PC-9 (cell line): ENCODE measurements at regions of chr9 and their contacts with region 1.

Region 1: GRCh38 chr9:70111042-70111602 is 67.5 kb downstream of the MAMDC2 start:
- DNase-seq: peak; percentile 48 to 58
- H3K4me3 ChIP-seq: no peak overlapping the region
- H3K27ac ChIP-seq: peak overlapping the region; percentile 46
- H3K4me1 ChIP-seq: peaks cover 28% of the 10 kb centered on the region
- H3K27me3 ChIP-seq: no peaks in the 10 kb centered on the region
- CTCF ChIP-seq: peak; percentile 91

Region 2: GRCh38 chr9:69066955-69067354 is 1044.2 kb before region 1 on chr9:
- CTCF ChIA-PET with region 1: no interaction called
- POLR2A ChIA-PET with region 1: no interaction called
- intact Hi-C with region 1: no loop called
- DNase-seq: no peak
- H3K4me3 ChIP-seq: no peak overlapping the region
- H3K27ac ChIP-seq: no peak overlapping the region
- H3K4me1 ChIP-seq: no peaks in the 10 kb centered on the region
- H3K27me3 ChIP-seq: no peaks in the 10 kb centered on the region
- CTCF ChIP-seq: no peak

Region 3: GRCh38 chr9:69174616-69175463 is 936.3 kb before region 1 on chr9:
- CTCF ChIA-PET with region 1: no interaction called
- POLR2A ChIA-PET with region 1: no interaction called
- intact Hi-C with region 1: loop called (anchors 10 kb)
- DNase-seq: peak; percentile 65 to 89
- H3K4me3 ChIP-seq: peak overlapping the region; percentile 70
- H3K27ac ChIP-seq: peak overlapping the region; percentile 97
- H3K4me1 ChIP-seq: peaks cover 89% of the 10 kb centered on the region
- H3K27me3 ChIP-seq: no peaks in the 10 kb centered on the region
- CTCF ChIP-seq: no peak

Region 4: GRCh38 chr9:69745716-69746437 is 365.2 kb before region 1 on chr9:
- CTCF ChIA-PET with region 1: interaction called, 3 read pairs
- POLR2A ChIA-PET with region 1: no interaction called
- intact Hi-C with region 1: loop called (anchors 5 kb)
- DNase-seq: no peak
- H3K4me3 ChIP-seq: no peak overlapping the region
- H3K27ac ChIP-seq: no peak overlapping the region
- H3K4me1 ChIP-seq: no peaks in the 10 kb centered on the region
- H3K27me3 ChIP-seq: no peaks in the 10 kb centered on the region
- CTCF ChIP-seq: peak; percentile 41; the same call in 1 of the 2 replicates

Region 5: DNA sequence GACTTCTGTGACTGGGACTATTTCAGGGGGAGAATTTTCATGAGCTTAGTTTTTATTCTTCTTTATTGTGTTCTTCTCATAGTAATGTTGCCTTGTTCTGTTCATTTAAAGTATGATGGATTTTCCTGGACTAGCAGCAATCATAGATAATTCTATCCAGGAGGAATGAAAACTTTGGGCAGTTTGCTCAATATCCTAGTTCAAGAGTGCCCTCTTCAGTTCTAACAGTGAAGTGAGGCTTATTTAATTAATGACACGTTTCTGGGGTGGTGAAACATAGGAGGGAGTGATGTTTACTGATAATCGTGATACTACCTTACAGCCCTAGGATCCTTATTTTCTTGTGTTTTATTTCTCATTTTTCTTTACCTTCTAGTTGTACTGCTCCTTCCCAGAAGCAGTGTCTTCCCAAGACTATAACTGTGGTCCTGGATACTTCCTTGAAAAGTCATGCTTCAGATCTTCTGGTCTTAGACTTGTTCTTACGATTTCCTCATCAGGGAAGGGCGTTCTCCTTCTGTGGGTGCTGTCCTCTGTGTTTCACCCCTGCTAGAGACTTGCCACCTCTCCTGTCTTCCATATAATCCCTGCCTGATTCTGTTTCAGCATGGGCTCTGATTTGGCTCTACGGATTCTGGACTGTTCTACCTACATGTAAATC is 233.1 kb before region 1 on chr9:
- CTCF ChIA-PET with region 1: no interaction called
- POLR2A ChIA-PET with region 1: no interaction called
- intact Hi-C with region 1: loop called (anchors 5 kb)
- DNase-seq: peak in 1 of 2 experiments; percentile 37
- H3K4me3 ChIP-seq: no peak overlapping the region
- H3K27ac ChIP-seq: no peak overlapping the region
- H3K4me1 ChIP-seq: 0 out of 2 replicates have a peak, but pooled peaks cover 5% of the 10 kb centered on the region
- H3K27me3 ChIP-seq: no peaks in the 10 kb centered on the region
- CTCF ChIP-seq: peak; percentile 73

Region 6: GRCh38 chr9:70049236-70049635 is 61.9 kb before region 1 on chr9:
- CTCF ChIA-PET with region 1: interaction called, 9 read pairs
- POLR2A ChIA-PET with region 1: no interaction called
- intact Hi-C with region 1: loop called (anchors 5 kb)
- DNase-seq: peak; percentile 50 to 62
- H3K4me3 ChIP-seq: no peak overlapping the region
- H3K27ac ChIP-seq: no peak overlapping the region
- H3K4me1 ChIP-seq: peaks cover 35% of the 10 kb centered on the region
- H3K27me3 ChIP-seq: no peaks in the 10 kb centered on the region
- CTCF ChIP-seq: no peak

Region 7: GRCh38 chr9:70263421-70263820 is 152.3 kb after region 1 on chr9:
- CTCF ChIA-PET with region 1: no interaction called
- POLR2A ChIA-PET with region 1: no interaction called
- intact Hi-C with region 1: no loop called
- DNase-seq: peak in 1 of 2 experiments; percentile 38
- H3K4me3 ChIP-seq: no peak overlapping the region
- H3K27ac ChIP-seq: no peak overlapping the region
- H3K4me1 ChIP-seq: peaks cover 30% of the 10 kb centered on the region
- H3K27me3 ChIP-seq: no peaks in the 10 kb centered on the region
- CTCF ChIP-seq: no peak

Region 8: DNA sequence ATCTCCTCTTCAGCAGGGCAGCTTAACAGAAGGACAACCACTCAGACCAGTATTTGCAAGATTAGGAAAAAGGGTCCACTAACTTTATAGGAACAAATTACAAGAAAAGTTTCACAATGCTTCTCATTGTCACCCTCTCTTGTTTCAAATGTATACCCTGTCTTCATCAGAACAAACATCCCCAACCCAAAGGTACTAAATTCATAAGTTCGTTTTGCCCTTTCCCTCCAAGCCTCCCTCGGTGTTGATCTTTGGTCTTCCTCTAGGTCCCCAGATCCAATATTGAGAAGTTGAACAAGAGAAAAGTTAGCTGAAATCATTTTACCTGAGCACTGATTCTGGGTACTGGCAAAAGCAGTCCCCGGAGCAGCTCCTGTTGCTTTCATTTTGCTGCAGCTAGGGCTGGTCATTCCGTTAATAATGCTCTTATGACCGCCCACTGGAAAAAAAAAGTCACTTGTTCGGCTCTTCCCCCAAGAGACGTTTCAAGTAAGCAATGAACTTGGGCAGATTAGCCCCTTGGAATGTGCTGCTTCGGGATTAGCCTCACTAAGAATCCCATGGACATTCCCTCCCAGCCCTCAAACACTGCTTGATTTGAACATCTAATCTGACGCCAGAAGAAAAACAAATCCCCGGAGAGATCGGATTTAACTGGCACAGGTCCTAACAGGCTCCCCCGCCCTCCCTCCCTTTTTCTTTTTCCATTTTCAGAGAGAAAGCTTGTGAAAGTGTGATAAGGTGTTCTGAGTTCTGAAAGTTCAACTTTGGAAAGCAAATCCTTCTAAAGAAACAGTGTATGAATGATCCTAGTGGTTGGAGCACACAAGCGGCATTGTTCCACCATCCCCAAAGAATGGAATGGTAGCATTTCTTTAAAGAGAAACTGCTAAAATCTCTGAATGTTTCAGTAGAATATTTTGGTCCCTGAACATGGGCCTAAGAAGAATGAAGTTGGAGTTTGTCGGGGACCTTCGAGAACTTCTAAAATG is 757.8 kb after region 1 on chr9:
- CTCF ChIA-PET with region 1: no interaction called
- POLR2A ChIA-PET with region 1: no interaction called
- intact Hi-C with region 1: no loop called
- DNase-seq: no peak
- H3K4me3 ChIP-seq: no peak overlapping the region
- H3K27ac ChIP-seq: no peak overlapping the region
- H3K4me1 ChIP-seq: no peaks in the 10 kb centered on the region
- H3K27me3 ChIP-seq: 0 out of 2 replicates have a peak, but pooled peaks cover 4% of the 10 kb centered on the region
- CTCF ChIP-seq: no peak